Naive thymus-derived CD4-positive, alpha-beta T cell (primary cell): ENCODE measurements at regions of chr6 and their contacts with region 1.

Region 1: DNA sequence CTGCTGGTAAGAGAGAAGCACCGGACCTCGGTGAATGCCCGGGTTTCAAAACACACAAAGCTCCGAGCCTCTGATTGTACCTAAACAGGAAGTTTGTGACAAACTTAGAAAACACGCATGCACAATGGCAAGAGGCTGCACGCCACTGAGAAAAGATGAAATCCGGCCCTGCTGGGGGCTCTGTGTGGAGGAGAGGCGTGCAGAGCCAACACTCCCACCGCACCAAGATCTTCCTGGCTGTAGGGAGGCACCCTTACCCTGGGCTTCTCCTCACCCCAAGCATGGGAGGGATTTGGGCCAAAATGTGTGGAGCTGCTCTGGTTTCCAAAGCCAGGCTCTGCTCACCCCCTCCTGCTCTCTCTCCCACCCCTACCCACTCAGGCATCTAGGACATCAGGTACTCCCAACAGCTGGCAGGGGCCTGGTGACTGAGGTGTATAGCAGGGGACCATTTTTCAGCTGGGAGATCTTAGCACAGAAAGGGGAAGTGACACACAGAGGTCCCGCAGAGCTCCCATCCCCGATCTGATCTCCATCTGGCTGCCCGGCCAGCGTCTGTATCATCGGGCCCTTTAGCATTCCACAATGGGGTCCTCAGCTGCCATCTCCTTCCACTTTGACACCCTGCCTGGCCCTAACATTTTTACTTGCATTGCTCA is 84.2 kb downstream of the TRERF1 start:
- DNase-seq: peak in 4 of 9 donors; percentile 22 to 35 (median 32)
- ATAC-seq: peak; percentile 70
- H3K4me3 ChIP-seq: peak overlapping the region; percentile 42
- H3K4me3 Mint-ChIP-seq: peak overlapping the region; percentile 68 to 87 (median 80)
- H3K27ac ChIP-seq: peak overlapping the region; percentile 58
- H3K27ac Mint-ChIP-seq: peak overlapping the region; percentile 80 to 98 (median 94)
- H3K4me1 ChIP-seq: peaks cover 48 to 68% of the 10 kb centered on the region in 2 donors
- H3K4me1 Mint-ChIP-seq: peaks cover 63 to 84% (median 73%) of the 10 kb centered on the region in 7 donors
- H3K27me3 ChIP-seq: no peaks in the 10 kb centered on the region
- H3K27me3 Mint-ChIP-seq: no peaks in the 10 kb centered on the region

Region 2: GRCh38 chr6:42402184-42402583 is 34.7 kb after region 1 on chr6:
- CTCF ChIA-PET with region 1: no interaction called
- POLR2A ChIA-PET with region 1: interaction called, 3 read pairs
- intact Hi-C with region 1: loop called (anchors 1 to 5 kb)
- DNase-seq: peak in 1 of 9 donors; percentile 51
- ATAC-seq: peak; percentile 55
- H3K4me3 ChIP-seq: peak overlapping the region; percentile 21
- H3K4me3 Mint-ChIP-seq: peak overlapping the region in 5 of 10 donors; percentile 30 to 67 (median 49)
- H3K27ac ChIP-seq: no peak overlapping the region
- H3K27ac Mint-ChIP-seq: peak overlapping the region in 4 of 9 donors; percentile 51 to 89 (median 78)
- H3K4me1 ChIP-seq: peaks cover 29 to 51% of the 10 kb centered on the region in 2 donors
- H3K4me1 Mint-ChIP-seq: peaks cover 56 to 98% (median 91%) of the 10 kb centered on the region in 7 donors
- H3K27me3 ChIP-seq: no peaks in the 10 kb centered on the region
- H3K27me3 Mint-ChIP-seq: no peaks in the 10 kb centered on the region